ENCODE measurements at regions of chr2 and their contacts with region 1.

Region 1: GRCh38 chr2:183078465-183079138 is at the start of gene DUSP19:
- DNase-seq: peak; percentile 96
- H3K4me3 ChIP-seq: peak within 1 kb of the TSS; percentile 44 to 47
- H3K27ac ChIP-seq: peak within 1 kb of the TSS; percentile 74 to 75
- H3K4me1 ChIP-seq: no peaks in the 10 kb centered on the region
- H3K27me3 ChIP-seq: no peaks in the 10 kb centered on the region
- CTCF ChIP-seq: peak in 1 of 4 experiments; percentile 16
- POLR2A ChIP-seq: peak; percentile 71
- total RNA-seq, gene DUSP19: 2.1 to 2.5 TPM

Region 2: GRCh38 chr2:183038341-183039300 is 40.0 kb before region 1 on chr2 and contains the start of gene NCKAP1:
- intact Hi-C with region 1: loop called (anchors 5 kb)
- DNase-seq: peak; percentile 90
- H3K4me3 ChIP-seq: peak within 1 kb of the TSS; percentile 88 to 94
- H3K27ac ChIP-seq: peak within 1 kb of the TSS; percentile 98 to 99
- H3K4me1 ChIP-seq: no peaks in the 10 kb centered on the region
- H3K27me3 ChIP-seq: no peaks in the 10 kb centered on the region
- CTCF ChIP-seq: peak; percentile 94 to 99 (median 98)
- POLR2A ChIP-seq: peak; percentile 65
- total RNA-seq, gene NCKAP1: 81.7 to 116 TPM

Region 3: GRCh38 chr2:183124222-183124956 is 45.8 kb after region 1 on chr2 and contains the start of gene NUP35:
- intact Hi-C with region 1: loop called (anchors 2 kb)
- DNase-seq: peak; percentile 89
- H3K4me3 ChIP-seq: peak within 1 kb of the TSS; percentile 62 to 74
- H3K27ac ChIP-seq: peak within 1 kb of the TSS; percentile 86 to 88
- H3K4me1 ChIP-seq: no peaks in the 10 kb centered on the region
- H3K27me3 ChIP-seq: no peaks in the 10 kb centered on the region
- CTCF ChIP-seq: no peak
- POLR2A ChIP-seq: no peak
- total RNA-seq, gene NUP35: 14.8 to 16.4 TPM

Measured in prostate gland (tissue), 2 donors.